IMR-90 (cell line): ENCODE measurements at regions of chr13 and their contacts with region 1.

Region 1: DNA sequence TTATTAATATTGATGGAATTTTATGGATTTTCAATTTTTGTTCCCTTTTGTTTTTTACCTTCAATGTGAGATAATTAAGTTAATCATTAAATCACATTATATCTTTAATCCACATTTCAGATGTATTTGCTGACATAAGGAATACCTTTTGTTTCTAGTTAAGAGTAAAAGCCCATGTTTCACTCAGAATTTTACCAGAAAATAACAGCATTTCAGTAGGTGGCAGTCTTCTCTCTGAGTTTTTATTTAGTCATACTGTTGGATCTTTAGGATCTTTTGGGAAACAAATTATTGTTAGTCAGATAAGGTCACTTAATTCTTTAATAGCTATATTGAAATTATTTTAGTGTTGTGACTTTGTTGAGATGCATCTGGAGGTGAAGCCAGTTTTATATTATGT is 67.9 kb downstream of the NDFIP2 start:
- DNase-seq: peak; percentile 11
- ATAC-seq: peak; percentile 75
- H3K4me3 ChIP-seq: no peak overlapping the region
- H3K27ac ChIP-seq: no peak overlapping the region
- H3K4me1 ChIP-seq: peaks cover 2% of the 10 kb centered on the region; the same call in 1 of the 2 replicates
- H3K27me3 ChIP-seq: no peaks in the 10 kb centered on the region
- CTCF ChIP-seq: peak; percentile 43
- POLR2A ChIP-seq: no peak
- RAD21 ChIP-seq: peak; percentile 36

Region 2: DNA sequence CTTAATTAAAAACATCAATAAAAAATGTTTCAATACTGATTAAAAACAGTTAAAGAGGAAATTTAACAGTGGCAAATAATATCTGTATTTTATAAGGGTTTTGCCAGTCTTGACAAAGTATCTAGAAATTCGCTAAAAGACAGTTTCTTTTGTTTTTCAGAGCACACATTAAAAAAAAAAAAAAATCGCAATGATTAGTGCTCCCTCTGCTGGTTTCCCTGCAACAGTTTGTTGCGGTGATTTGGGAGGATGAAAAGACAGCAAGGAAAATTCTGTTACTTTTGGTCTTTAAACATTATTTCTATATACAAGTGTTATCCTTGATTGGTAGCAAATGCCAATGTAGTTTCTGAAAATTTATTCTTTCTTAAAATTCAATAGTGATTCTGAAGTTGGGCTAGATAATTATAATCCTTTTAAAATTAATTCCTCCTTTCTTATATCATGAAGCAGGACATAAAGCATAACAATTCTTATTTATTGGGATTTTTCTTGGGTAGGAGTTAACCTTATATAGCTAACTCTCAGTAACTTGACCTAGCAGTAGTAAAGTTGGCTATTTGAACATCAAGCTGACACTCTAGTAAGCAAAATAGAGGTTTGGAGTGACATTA is 815.1 kb after region 1 on chr13:
- CTCF ChIA-PET with region 1: no interaction called
- POLR2A ChIA-PET with region 1: no interaction called
- dilution Hi-C with region 1: no loop called
- in situ Hi-C with region 1: loop called (anchors 25 kb)
- intact Hi-C with region 1: loop called (anchors 5 kb)
- DNase-seq: peak; percentile 49
- ATAC-seq: peak; percentile 27; the same call in 1 of the 2 replicates
- H3K4me3 ChIP-seq: no peak overlapping the region
- H3K27ac ChIP-seq: no peak overlapping the region
- H3K4me1 ChIP-seq: no peaks in the 10 kb centered on the region
- H3K27me3 ChIP-seq: no peaks in the 10 kb centered on the region
- CTCF ChIP-seq: peak; percentile 88
- POLR2A ChIP-seq: no peak
- RAD21 ChIP-seq: peak; percentile 74